GM12878 (cell line): ENCODE measurements at regions of chr18 and their contacts with region 1.

Region 1: GRCh38 chr18:24878289-24878688 is 417.9 kb downstream of the HRH4 start:
- DNase-seq: no peak
- ATAC-seq: peak; percentile 52; the same call in 2 of the 3 replicates
- H3K4me3 ChIP-seq: no peak overlapping the region
- H3K27ac ChIP-seq: no peak overlapping the region
- H3K4me1 ChIP-seq: no peaks in the 10 kb centered on the region
- H3K27me3 ChIP-seq: no peaks in the 10 kb centered on the region; a peak in 1 of 4 replicates
- CTCF ChIP-seq: peak; percentile 20 to 53 (median 33); a peak in 4 of 6 replicates
- EP300 ChIP-seq: no peak
- POLR2A ChIP-seq: no peak
- RAD21 ChIP-seq: peak; percentile 69

Region 2: GRCh38 chr18:25062720-25063119 is 184.4 kb after region 1 on chr18:
- CTCF ChIA-PET with region 1: no interaction called
- POLR2A ChIA-PET with region 1: no interaction called
- RAD21 ChIA-PET with region 1: no interaction called
- SMC1A ChIA-PET with region 1: no interaction called
- in situ Hi-C with region 1: no loop called
- intact Hi-C with region 1: loop called (anchors 5 kb)
- DNase-seq: no peak
- ATAC-seq: no peak
- H3K4me3 ChIP-seq: no peak overlapping the region
- H3K27ac ChIP-seq: no peak overlapping the region
- H3K4me1 ChIP-seq: no peaks in the 10 kb centered on the region
- H3K27me3 ChIP-seq: no peaks in the 10 kb centered on the region; a peak in 1 of 4 replicates
- CTCF ChIP-seq: 0 out of 6 replicates have a peak, but pooled peaks of 1 of the 3 experiments have one; percentile 4
- EP300 ChIP-seq: no peak
- POLR2A ChIP-seq: no peak
- RAD21 ChIP-seq: no peak

Region 3: DNA sequence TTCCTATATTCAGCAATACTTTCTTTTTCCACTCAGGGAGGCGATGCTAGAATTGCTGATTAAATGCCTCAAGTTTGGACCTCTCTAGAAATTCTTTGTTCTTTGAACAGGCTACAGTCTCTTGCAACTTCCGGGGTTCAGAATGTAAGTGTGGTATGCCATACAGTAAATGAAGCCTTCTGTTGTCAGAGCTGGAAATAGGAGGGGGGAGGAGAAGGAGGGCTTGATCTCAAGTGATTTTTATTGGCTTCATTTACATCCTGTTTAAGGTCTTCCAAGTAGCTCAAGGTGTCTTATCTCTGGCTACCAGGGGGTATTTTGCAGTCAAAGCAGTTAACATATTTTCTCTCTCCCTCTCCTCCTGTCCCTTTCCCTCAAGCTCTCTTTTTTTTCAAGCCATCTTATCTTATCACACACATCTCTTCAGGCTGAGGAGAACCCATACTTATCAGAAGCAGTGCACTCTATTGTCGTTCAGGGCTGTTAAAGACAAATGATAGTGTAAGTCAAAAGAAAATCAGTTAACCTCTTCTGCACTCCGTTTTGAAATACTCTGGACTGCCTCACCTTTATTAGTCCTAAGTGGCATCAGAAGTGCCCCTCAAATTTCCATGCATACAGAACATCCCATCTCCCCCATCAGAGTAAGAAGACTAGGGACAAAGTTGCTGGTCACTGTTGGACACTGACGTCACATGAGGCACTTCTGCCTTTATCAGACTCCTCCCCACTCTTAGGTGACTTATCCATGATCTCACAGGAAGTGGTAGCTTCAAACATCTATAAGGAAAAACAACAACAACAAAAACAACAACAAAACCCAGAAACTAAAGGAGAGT is 361.5 kb after region 1 on chr18:
- CTCF ChIA-PET with region 1: no interaction called
- POLR2A ChIA-PET with region 1: no interaction called
- RAD21 ChIA-PET with region 1: no interaction called
- SMC1A ChIA-PET with region 1: no interaction called
- in situ Hi-C with region 1: no loop called
- intact Hi-C with region 1: loop called (anchors 5 kb)
- DNase-seq: no peak
- ATAC-seq: no peak
- H3K4me3 ChIP-seq: no peak overlapping the region
- H3K27ac ChIP-seq: no peak overlapping the region
- H3K4me1 ChIP-seq: no peaks in the 10 kb centered on the region
- H3K27me3 ChIP-seq: no peaks in the 10 kb centered on the region
- CTCF ChIP-seq: no peak
- EP300 ChIP-seq: no peak
- POLR2A ChIP-seq: no peak
- RAD21 ChIP-seq: no peak

Region 4: GRCh38 chr18:25832001-25832604 is 953.8 kb after region 1 on chr18:
- CTCF ChIA-PET with region 1: no interaction called
- POLR2A ChIA-PET with region 1: no interaction called
- RAD21 ChIA-PET with region 1: interaction called, 3 read pairs
- SMC1A ChIA-PET with region 1: no interaction called
- in situ Hi-C with region 1: loop called (anchors 25 kb)
- intact Hi-C with region 1: loop called (anchors 2 kb)
- DNase-seq: no peak
- ATAC-seq: peak; percentile 92
- H3K4me3 ChIP-seq: no peak overlapping the region
- H3K27ac ChIP-seq: no peak overlapping the region
- H3K4me1 ChIP-seq: no peaks in the 10 kb centered on the region
- H3K27me3 ChIP-seq: peaks cover 0 to 2% of the 10 kb centered on the region in 2 experiments; a peak in 1 of 4 replicates
- CTCF ChIP-seq: peak; percentile 73 to 86 (median 79)
- EP300 ChIP-seq: no peak
- POLR2A ChIP-seq: no peak
- RAD21 ChIP-seq: peak; percentile 60

Region 5: DNA sequence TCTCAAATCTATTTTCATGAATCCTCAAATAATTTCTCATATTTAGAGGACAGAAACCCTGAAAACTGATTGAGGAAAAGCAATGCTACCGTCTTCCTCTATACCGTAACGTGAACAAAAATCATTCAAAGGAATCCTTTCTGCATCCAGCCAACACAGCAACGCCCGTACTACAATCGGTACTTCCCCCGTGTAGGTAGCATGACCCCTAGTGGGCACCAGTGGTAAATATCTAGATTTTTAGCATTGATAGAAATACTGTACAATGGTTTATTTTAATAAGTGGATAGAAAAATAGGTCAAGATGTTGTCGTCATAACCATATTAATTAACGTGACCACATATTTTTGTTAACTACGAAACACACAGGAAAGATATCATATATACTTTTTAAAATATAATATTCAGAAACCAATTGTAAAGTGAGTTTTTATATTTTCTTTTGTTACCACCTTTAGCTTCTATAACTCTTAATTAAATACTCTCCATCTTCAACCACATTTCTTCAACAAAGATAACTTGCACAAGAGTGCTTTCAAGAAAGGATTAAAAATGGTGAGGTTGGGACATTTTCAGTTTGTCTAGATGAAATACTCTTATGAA is 1018.0 kb after region 1 on chr18:
- CTCF ChIA-PET with region 1: no interaction called
- POLR2A ChIA-PET with region 1: no interaction called
- RAD21 ChIA-PET with region 1: no interaction called
- SMC1A ChIA-PET with region 1: no interaction called
- in situ Hi-C with region 1: no loop called
- intact Hi-C with region 1: loop called (anchors 5 kb)
- DNase-seq: no peak
- ATAC-seq: peak; percentile 87
- H3K4me3 ChIP-seq: no peak overlapping the region
- H3K27ac ChIP-seq: no peak overlapping the region
- H3K4me1 ChIP-seq: 0 out of 2 replicates have a peak, but pooled peaks cover 3% of the 10 kb centered on the region
- H3K27me3 ChIP-seq: no peaks in the 10 kb centered on the region; a peak in 1 of 4 replicates
- CTCF ChIP-seq: peak; percentile 69 to 78 (median 76)
- EP300 ChIP-seq: no peak
- POLR2A ChIP-seq: no peak
- RAD21 ChIP-seq: peak; percentile 75